HEK293 (cell line): ENCODE measurements at regions of chr5 and their contacts with region 1.

Region 1: DNA sequence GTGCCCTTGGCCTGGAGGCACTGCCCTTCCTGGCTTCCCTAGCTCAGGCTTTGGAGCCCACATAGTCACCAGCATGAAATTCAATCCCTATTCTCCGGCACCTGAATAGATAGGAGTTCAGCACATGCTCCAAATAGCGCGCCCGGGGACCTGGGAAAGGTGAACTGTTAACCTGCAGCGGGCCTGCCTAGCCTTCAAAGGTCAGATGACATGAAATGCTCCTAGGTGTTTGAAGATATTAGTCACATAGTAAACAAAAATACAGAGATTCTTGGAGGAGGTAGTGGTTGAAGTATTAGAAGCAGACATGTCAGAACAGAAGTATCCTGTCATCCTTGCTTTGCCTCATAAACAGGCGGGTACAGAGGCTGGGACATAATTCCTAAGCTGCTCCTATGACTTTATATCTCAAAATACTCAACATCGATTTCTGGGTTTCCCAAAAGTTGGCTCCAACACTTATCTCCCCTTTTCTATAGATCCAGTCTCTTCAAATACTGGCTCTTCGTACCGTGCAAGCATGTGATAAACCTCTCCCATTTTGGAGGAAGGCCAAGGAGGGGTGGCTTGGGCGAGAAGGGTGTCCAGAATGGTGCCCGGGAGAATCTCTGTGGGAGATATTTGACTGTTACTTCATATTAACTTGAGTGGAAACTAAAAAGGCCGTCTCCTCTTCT is 88.0 kb upstream of the ANKH start:
- H3K4me3 ChIP-seq: no peak overlapping the region
- H3K27ac ChIP-seq: no peak overlapping the region
- H3K4me1 ChIP-seq: no peaks in the 10 kb centered on the region
- CTCF ChIP-seq: no peak

Region 2: DNA sequence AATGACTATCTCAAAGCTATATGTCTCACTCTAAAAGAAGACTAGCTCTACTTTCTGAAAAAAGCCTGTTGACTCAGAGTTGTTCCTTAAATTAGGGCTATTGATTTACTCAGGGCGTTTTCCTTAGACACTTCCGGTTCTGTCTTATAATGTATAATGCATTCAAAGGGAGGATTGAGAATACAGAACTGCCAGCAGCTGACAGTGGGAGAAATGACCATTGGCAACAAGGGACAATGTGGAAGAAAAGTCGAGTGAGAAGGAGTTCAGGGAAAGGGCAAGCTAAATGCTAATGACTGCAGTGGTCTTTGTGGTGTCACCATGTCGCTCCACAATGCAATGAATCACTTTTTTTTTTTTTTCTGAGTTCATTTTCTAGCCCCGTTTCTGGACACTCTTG is 22.3 kb before region 1 on chr5:
- CTCF ChIA-PET with region 1: interaction called, 16 read pairs
- POLR2A ChIA-PET with region 1: no interaction called
- H3K4me3 ChIP-seq: no peak overlapping the region
- H3K27ac ChIP-seq: no peak overlapping the region
- H3K4me1 ChIP-seq: no peaks in the 10 kb centered on the region
- CTCF ChIP-seq: no peak

Region 3: DNA sequence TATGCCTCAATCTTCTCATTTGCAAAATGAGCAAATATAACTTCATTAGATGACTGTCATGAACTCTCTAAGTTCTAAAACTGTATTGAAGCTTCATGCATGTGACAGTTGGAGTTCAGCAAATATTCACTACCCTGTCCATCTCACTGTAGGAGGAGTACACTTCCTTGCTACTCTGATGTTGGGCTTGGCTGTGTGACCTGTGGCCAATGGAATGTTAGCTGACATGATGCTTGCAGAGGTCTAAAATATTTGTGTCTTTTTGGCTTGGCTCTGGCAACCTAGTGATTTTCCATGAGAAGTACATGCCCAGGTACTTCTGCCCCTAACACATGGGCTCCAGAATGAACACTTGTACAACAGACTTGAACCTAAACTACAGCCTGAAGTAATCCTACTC is 115.1 kb after region 1 on chr5:
- CTCF ChIA-PET with region 1: no interaction called
- POLR2A ChIA-PET with region 1: no interaction called
- H3K4me3 ChIP-seq: no peak overlapping the region
- H3K27ac ChIP-seq: no peak overlapping the region
- H3K4me1 ChIP-seq: no peaks in the 10 kb centered on the region
- CTCF ChIP-seq: no peak